ENCODE measurements at regions of chr2 and their contacts with region 1.

Region 1: DNA sequence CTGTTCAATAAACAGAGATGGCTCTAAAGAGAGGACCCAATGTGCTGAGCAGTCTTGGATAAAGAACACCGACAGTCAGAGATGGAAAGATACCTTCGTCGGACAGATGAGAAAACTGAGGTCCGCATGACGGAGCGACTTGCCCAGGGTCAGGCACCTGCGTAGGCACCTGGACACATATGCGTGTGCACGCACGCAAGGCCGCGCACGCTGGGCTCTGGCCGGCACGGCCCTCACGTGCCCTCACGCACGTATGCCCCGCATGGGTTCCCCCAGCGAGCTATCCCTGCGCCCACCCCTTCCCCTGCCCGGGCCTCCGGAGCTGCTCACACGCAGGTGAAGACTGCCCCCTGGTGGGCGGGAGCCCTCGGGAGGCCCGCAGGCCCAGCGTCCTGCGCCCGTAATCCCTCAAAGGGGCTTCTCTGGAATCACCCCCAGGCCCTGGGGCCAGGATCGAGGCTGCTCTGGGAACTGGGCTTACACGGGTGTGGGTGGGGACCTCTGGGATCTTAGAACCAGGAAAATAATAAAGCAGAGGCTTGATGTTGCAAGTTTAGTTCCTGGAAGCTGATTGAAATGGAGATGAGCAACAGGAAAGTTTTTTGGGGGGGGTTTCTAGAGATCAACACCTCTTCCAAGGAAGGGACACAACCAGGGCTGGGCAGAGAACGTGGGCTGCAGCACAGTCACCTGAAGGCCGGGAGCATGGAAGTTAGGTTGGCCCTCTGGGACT is 246.3 kb downstream of the TNS1 start:
- DNase-seq: peak; percentile 48
- ATAC-seq: peak; percentile 52
- H3K4me3 Mint-ChIP-seq: no peak overlapping the region
- H3K27ac Mint-ChIP-seq: no peak overlapping the region
- H3K4me1 Mint-ChIP-seq: peaks cover 6% of the 10 kb centered on the region
- H3K27me3 Mint-ChIP-seq: peaks cover 23% of the 10 kb centered on the region
- CTCF ChIP-seq: no peak

Region 2: GRCh38 chr2:216519154-216519762 is 1237.3 kb before region 1 on chr2:
- CTCF ChIA-PET with region 1: interaction called, 4 read pairs
- POLR2A ChIA-PET with region 1: no interaction called
- intact Hi-C with region 1: loop called (anchors 5 kb)
- DNase-seq: no peak
- ATAC-seq: peak; percentile 56
- H3K4me3 Mint-ChIP-seq: no peak overlapping the region
- H3K27ac Mint-ChIP-seq: no peak overlapping the region
- H3K4me1 Mint-ChIP-seq: no peaks in the 10 kb centered on the region
- H3K27me3 Mint-ChIP-seq: no peaks in the 10 kb centered on the region
- CTCF ChIP-seq: no peak

Region 3: GRCh38 chr2:216680951-216681629 is 1075.5 kb before region 1 on chr2:
- CTCF ChIA-PET with region 1: interaction called, 3 read pairs
- POLR2A ChIA-PET with region 1: no interaction called
- intact Hi-C with region 1: loop called (anchors 1 kb)
- DNase-seq: no peak
- ATAC-seq: no peak
- H3K4me3 Mint-ChIP-seq: no peak overlapping the region
- H3K27ac Mint-ChIP-seq: no peak overlapping the region
- H3K4me1 Mint-ChIP-seq: no peaks in the 10 kb centered on the region
- H3K27me3 Mint-ChIP-seq: peaks cover 40% of the 10 kb centered on the region
- CTCF ChIP-seq: no peak

Region 4: DNA sequence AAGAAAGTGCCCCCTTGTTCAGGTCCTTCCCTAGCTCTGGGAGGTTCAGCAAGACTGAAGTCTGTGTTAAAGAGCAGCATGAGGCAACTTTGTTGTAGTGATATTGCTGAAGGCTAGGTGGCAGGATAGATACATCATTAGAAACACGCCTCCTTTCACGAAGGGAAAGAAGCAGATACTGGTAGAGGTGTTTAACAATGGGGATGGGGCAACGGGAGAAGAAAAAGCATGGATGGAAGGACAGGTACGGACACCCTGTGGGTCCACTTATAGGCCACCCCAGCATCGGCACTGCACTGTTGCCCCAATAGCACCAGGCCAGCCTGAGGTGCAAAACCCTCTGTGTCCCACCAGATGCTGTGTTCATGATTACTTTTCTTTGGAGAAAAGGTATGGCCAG is 1057.6 kb before region 1 on chr2:
- CTCF ChIA-PET with region 1: no interaction called
- POLR2A ChIA-PET with region 1: no interaction called
- intact Hi-C with region 1: loop called (anchors 5 kb)
- DNase-seq: no peak
- ATAC-seq: no peak
- H3K4me3 Mint-ChIP-seq: no peak overlapping the region
- H3K27ac Mint-ChIP-seq: no peak overlapping the region
- H3K4me1 Mint-ChIP-seq: peaks cover 4% of the 10 kb centered on the region
- H3K27me3 Mint-ChIP-seq: peaks cover 33% of the 10 kb centered on the region
- CTCF ChIP-seq: no peak

Region 5: DNA sequence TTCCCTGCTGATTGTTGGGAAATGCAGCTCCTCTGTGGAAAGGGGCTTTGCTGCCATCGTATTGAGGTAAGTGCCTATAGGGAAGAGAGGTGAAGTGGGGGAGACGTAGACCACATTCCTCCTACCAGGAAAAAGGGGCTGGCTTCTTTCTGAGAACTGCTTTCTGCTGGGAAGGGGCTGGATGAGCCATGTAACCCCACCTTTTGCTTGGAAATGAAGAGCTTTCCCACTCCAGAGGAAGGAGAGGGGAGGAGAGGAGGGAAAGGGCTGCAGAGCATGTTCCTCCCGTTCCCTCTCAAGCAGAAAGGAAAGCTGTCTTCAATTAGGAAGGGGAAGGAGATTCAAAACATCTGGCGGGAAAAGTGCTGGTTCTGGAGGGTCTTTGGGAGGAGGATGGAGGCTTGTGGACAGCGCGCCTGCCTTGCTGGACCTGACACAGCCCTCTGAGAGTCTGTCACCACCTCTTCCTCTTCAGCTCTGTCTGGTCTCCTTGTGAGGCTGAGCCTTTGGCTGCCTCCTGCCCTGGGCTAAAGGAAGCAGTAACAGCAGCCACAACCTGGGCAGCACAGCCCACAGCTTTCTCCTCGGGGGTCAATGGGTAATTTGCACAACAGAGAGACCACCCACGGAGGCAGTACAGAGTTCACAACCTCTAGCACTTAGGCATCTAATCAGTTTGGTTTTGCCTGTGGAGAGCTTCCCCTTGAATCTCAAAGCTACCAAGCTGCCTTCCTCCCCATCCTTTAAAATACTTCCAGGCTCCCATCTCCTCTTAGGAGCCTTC is 486.6 kb before region 1 on chr2:
- CTCF ChIA-PET with region 1: no interaction called
- POLR2A ChIA-PET with region 1: no interaction called
- intact Hi-C with region 1: no loop called
- DNase-seq: no peak
- ATAC-seq: no peak
- H3K4me3 Mint-ChIP-seq: no peak overlapping the region
- H3K27ac Mint-ChIP-seq: no peak overlapping the region
- H3K4me1 Mint-ChIP-seq: no peaks in the 10 kb centered on the region
- H3K27me3 Mint-ChIP-seq: peaks cover 52% of the 10 kb centered on the region
- CTCF ChIP-seq: no peak

Region 6: DNA sequence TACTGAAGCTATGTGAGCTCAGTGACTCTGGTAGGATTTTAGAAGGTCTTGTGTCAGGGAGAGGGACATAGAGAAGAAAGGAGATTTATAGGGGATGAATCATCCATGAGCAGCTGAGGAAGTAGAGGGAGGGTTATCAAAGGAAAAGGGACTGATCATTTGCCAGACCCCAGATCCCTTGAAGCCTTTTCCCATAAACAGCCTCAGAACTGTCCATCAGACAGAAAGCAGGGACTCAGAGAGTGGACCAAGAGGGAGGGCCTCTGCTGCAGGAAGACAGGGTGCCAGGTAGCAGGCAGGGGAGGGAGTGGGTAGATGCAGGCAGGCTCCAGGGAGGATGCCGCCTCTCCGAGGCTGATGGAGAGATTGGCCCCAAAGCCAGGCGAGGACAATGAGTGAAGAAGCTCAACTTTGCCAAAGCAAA is 112.4 kb after region 1 on chr2:
- CTCF ChIA-PET with region 1: no interaction called
- POLR2A ChIA-PET with region 1: no interaction called
- intact Hi-C with region 1: no loop called
- DNase-seq: no peak
- ATAC-seq: no peak
- H3K4me3 Mint-ChIP-seq: no peak overlapping the region
- H3K27ac Mint-ChIP-seq: no peak overlapping the region
- H3K4me1 Mint-ChIP-seq: peaks cover 36% of the 10 kb centered on the region
- H3K27me3 Mint-ChIP-seq: peaks cover 3% of the 10 kb centered on the region
- CTCF ChIP-seq: no peak

Region 7: DNA sequence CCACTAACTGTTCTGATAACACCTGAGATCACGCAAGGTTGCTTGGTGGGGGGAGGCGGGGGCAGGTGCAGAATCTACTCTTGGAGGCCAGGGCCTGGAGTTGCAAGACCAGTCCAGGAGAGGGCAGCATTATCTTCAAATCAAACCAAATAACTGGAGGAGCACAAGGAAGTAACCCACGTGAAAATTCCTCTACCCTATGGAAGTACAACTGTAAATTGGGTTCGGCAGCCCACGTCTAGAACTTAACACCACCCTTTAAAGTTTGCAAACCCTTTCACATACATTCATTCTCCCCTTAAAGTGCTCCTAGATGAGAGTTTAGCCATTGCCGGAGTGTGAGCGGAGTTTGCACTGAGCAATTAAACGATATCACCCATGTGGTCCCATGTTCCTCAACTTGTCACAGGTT is 429.8 kb after region 1 on chr2:
- CTCF ChIA-PET with region 1: no interaction called
- POLR2A ChIA-PET with region 1: no interaction called
- intact Hi-C with region 1: no loop called
- DNase-seq: peak; percentile 43
- ATAC-seq: peak; percentile 99
- H3K4me3 Mint-ChIP-seq: no peak overlapping the region
- H3K27ac Mint-ChIP-seq: no peak overlapping the region
- H3K4me1 Mint-ChIP-seq: peaks cover 7% of the 10 kb centered on the region
- H3K27me3 Mint-ChIP-seq: peaks cover 1% of the 10 kb centered on the region
- CTCF ChIP-seq: peak; percentile 3

Measured in activated B cell treated with CpG ODN at 0.5 μM for 24 hours (primary cell).